ENCODE measurements at regions of chr12 and their contacts with region 1.

Region 1: DNA sequence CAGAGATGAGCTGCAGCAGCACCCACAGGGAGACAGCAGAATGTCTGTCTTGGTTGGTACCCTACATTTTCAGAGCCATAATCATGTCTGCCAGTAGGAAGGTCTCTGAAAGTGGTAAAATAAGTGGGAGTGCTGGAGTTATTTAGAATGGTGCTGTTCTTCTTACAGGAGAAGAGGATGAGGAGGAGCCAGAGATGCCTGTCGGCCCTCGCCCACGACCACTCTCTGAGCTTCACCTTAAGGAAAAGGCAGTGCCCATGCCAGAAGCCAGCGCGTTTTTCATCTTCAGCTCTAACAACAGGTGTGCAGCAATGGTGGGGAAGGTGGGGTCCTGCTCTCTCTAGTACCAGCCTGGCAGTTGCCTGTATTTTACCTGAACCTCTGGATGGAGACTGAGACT is 201.7 kb upstream of the FKBP4 start:
- DNase-seq: no peak
- H3K4me3 ChIP-seq: no peak overlapping the region
- H3K27ac ChIP-seq: no peak overlapping the region
- H3K4me1 ChIP-seq: no peaks in the 10 kb centered on the region
- H3K27me3 ChIP-seq: no peaks in the 10 kb centered on the region
- CTCF ChIP-seq: no peak
- POLR2A ChIP-seq: no peak

Region 2: GRCh38 chr12:2613326-2614073 is 20.5 kb after region 1 on chr12:
- intact Hi-C with region 1: loop called (anchors 1 kb)
- DNase-seq: no peak
- H3K4me3 ChIP-seq: no peak overlapping the region
- H3K27ac ChIP-seq: peak overlapping the region in 1 of 2 donors; percentile 69
- H3K4me1 ChIP-seq: peaks cover 0 to 6% of the 10 kb centered on the region in 2 donors
- H3K27me3 ChIP-seq: no peaks in the 10 kb centered on the region
- CTCF ChIP-seq: no peak
- POLR2A ChIP-seq: no peak

Measured in breast epithelium (tissue), 4 donors.